Activated T-helper 2 cell treated with anti-CD3 and anti-CD28 coated beads, Interferon-gamma antibody, Interleukin-2, Interleukin-4, amounts not matched to agents 10 μg/mL and 5 μg/mL and 100 μg/mL, durations not matched to agents 14 hours and 24 hours and 36 hours (primary cell): ENCODE measurements at regions of chr22 and their contacts with region 1.

Region 1: DNA sequence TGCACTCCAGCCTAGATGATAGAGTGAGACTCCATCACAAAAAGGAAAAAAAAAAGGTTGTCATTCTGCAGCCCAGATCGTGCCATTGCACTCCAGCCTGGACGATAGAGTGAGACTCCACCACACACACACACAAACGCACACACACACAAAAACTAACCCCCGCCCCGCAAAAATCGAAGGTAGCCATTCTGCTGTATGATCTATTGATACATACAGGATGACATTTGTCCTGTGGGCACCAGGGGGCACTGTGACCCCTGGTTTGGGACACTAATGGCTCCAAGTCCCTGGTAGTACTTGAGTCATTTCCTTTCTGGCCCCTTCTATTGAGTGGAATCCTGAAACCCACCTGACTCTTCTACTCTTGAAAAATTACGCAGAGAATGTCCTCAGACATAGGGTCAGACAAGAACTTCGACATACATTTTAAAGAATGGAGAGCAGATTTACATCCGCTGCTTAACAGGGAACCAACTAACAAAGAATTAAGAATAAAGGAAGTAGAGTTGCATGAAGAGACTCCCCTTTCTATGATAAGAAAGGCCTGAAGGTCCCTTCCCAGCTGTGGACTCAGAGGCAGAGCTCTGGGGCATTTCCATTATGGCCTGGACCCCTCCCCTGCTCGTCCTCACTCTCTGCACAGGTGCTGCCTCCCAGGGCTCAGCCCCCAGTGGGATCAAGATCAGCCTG is 35.0 kb upstream of the PRAME start:
- DNase-seq: peak; percentile 38
- H3K4me3 Mint-ChIP-seq: no peak overlapping the region
- H3K27ac Mint-ChIP-seq: no peak overlapping the region
- H3K4me1 Mint-ChIP-seq: peaks cover 4% of the 10 kb centered on the region
- H3K27me3 Mint-ChIP-seq: peaks cover 3% of the 10 kb centered on the region

Region 2: DNA sequence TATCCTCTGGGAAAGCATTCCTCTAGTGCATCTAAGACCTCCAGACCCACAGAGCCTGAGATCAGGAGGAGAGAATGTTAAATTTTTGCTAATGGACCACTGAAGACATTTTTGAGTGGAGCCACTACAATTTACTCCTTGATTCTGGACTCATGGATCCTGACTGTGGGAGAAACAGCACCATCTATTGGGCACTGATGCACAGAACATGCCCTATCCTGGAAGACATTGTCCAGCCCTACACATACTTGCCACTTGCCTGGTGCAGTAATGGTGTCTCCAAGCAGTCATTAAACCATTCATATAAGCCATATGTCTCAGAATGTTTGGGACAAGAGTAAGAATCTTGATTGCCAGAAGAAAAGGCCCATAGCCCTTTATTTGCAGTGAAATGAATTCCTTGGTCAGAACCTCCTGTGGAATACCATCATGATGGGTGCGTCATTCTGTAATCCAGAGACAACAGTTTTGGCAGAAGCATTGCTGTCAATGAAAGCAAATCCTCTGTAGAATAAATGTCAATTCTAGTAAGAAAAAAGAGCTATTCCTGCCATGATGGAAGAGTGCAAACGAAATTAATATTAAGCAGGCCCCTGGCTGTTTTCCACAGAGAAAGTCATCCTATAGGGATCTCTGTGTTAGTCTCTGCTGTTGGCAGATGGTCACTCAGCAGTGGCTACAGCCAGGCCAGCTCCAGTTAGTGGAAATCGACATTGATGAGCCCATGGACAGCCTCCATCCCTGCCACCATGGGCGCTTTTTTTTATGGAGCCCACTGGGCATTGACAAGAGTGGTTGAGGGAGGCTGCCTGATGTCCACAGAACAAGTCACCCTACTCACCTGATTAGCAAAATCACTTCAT is 93.8 kb after region 1 on chr22:
- intact Hi-C with region 1: loop called (anchors 10 kb)
- DNase-seq: no peak
- H3K4me3 Mint-ChIP-seq: no peak overlapping the region
- H3K27ac Mint-ChIP-seq: no peak overlapping the region
- H3K4me1 Mint-ChIP-seq: no peaks in the 10 kb centered on the region
- H3K27me3 Mint-ChIP-seq: peaks cover 3% of the 10 kb centered on the region